CD8-positive, alpha-beta memory T cell (primary cell): ENCODE measurements at regions of chr3 and their contacts with region 1.

Region 1: DNA sequence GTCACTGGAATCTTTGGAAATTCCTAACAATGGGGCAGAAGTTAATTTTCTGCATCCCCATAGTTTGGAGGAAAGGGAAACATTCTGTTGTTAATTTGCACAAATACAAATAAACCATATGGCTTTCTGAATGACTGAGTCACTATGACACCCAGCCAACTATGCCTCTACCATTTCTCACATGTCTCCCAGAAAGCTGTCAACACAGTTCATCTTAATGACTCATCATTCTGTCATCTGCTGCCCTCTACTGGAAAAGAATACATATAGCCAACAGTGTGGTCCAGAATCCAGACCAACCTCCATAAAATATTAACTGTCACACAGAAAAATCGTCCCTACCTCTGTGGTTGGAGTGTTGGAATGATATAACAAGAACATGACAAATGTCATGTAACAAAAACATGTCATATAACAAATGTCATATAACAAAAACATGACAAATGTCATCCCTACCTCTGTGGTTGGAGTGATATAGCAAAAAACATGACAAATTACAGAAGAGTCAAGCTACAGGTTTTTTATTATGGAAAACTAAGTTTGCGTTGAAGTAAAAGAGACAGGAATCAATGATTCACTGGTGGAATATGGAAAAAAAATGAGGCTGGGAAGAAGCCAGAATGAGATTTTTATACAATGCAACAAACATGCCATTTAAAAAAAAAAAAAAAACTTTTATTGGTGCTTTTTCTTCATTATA is 47.7 kb upstream of the GYG1 start:
- DNase-seq: peak in 2 of 5 donors; percentile 19 to 30
- H3K4me3 ChIP-seq: no peak overlapping the region
- H3K4me3 Mint-ChIP-seq: no peak overlapping the region
- H3K27ac ChIP-seq: no peak overlapping the region
- H3K27ac Mint-ChIP-seq: no peak overlapping the region
- H3K4me1 ChIP-seq: no peaks in the 10 kb centered on the region
- H3K4me1 Mint-ChIP-seq: no peaks in the 10 kb centered on the region
- H3K27me3 ChIP-seq: no peaks in the 10 kb centered on the region
- H3K27me3 Mint-ChIP-seq: peaks cover 0 to 19% of the 10 kb centered on the region in 2 donors

Region 2: GRCh38 chr3:148582126-148582525 is 361.5 kb before region 1 on chr3:
- CTCF ChIA-PET with region 1: no interaction called
- POLR2A ChIA-PET with region 1: no interaction called
- DNase-seq: no peak
- H3K4me3 ChIP-seq: no peak overlapping the region
- H3K4me3 Mint-ChIP-seq: no peak overlapping the region
- H3K27ac ChIP-seq: no peak overlapping the region
- H3K27ac Mint-ChIP-seq: no peak overlapping the region
- H3K4me1 ChIP-seq: no peaks in the 10 kb centered on the region
- H3K4me1 Mint-ChIP-seq: no peaks in the 10 kb centered on the region
- H3K27me3 ChIP-seq: no peaks in the 10 kb centered on the region
- H3K27me3 Mint-ChIP-seq: no peaks in the 10 kb centered on the region

Region 3: GRCh38 chr3:148861277-148861869 is 82.3 kb before region 1 on chr3:
- CTCF ChIA-PET with region 1: interaction called, 34 read pairs
- POLR2A ChIA-PET with region 1: no interaction called
- DNase-seq: peak in 2 of 5 donors; percentile 7 to 11
- H3K4me3 ChIP-seq: no peak overlapping the region
- H3K4me3 Mint-ChIP-seq: no peak overlapping the region
- H3K27ac ChIP-seq: no peak overlapping the region
- H3K27ac Mint-ChIP-seq: no peak overlapping the region
- H3K4me1 ChIP-seq: no peaks in the 10 kb centered on the region
- H3K4me1 Mint-ChIP-seq: no peaks in the 10 kb centered on the region
- H3K27me3 ChIP-seq: no peaks in the 10 kb centered on the region
- H3K27me3 Mint-ChIP-seq: peaks cover 8 to 42% of the 10 kb centered on the region in 2 donors

Region 4: GRCh38 chr3:148889828-148890227 is 53.8 kb before region 1 on chr3:
- CTCF ChIA-PET with region 1: no interaction called
- POLR2A ChIA-PET with region 1: no interaction called
- DNase-seq: no peak
- H3K4me3 ChIP-seq: no peak overlapping the region
- H3K4me3 Mint-ChIP-seq: no peak overlapping the region
- H3K27ac ChIP-seq: no peak overlapping the region
- H3K27ac Mint-ChIP-seq: no peak overlapping the region
- H3K4me1 ChIP-seq: no peaks in the 10 kb centered on the region
- H3K4me1 Mint-ChIP-seq: no peaks in the 10 kb centered on the region
- H3K27me3 ChIP-seq: no peaks in the 10 kb centered on the region
- H3K27me3 Mint-ChIP-seq: peaks cover 1 to 33% of the 10 kb centered on the region in 2 donors

Region 5: DNA sequence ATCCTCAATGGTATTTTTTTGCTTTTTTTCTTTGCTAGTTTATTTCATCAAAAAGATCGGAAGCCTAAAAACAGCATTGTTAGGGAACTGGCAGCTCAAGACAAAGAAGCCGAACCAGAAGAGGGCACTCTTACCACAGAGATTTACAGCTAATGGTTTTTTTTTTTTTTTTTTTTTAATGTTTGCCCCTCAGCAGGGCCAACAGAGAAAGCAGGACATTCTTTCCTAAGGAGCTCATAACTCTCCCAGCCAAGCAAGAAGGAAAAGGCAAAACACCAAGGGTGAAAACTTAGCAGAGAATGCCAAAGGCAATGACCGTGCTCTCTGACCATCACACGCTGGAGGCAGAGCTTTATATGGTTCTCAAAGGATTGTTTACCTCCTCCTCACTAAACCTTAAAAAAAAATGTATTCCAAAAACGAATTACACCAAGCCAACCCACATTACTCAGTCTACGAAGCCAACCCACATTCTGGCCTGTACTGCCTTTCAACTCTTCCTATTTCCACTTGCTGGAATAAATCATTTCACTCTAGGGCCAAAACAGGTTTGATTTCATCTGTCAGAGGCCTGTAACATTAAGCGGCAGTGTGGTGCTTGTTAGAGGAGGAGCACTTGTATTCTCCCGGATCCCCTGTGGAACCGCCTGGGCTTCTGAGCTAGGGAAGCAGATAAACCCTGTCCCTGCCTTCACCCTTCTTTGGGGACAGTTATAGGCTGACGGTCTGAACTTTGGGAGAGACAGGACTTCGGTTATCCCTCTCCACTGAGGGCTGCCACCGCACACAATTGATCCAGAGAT is 12.1 kb after region 1 on chr3:
- CTCF ChIA-PET with region 1: interaction called, 12 read pairs
- POLR2A ChIA-PET with region 1: no interaction called
- DNase-seq: peak in 4 of 5 donors; percentile 12 to 51 (median 30)
- H3K4me3 ChIP-seq: no peak overlapping the region
- H3K4me3 Mint-ChIP-seq: no peak overlapping the region
- H3K27ac ChIP-seq: no peak overlapping the region
- H3K27ac Mint-ChIP-seq: peak overlapping the region in 1 of 8 donors; percentile 26
- H3K4me1 ChIP-seq: no peaks in the 10 kb centered on the region
- H3K4me1 Mint-ChIP-seq: peaks cover 0 to 4% (median 3%) of the 10 kb centered on the region in 3 donors
- H3K27me3 ChIP-seq: no peaks in the 10 kb centered on the region
- H3K27me3 Mint-ChIP-seq: peaks cover 2 to 3% of the 10 kb centered on the region in 2 donors

Region 6: GRCh38 chr3:149038322-149038721 is 94.7 kb after region 1 on chr3:
- CTCF ChIA-PET with region 1: no interaction called
- POLR2A ChIA-PET with region 1: no interaction called
- DNase-seq: no peak
- H3K4me3 ChIP-seq: no peak overlapping the region
- H3K4me3 Mint-ChIP-seq: no peak overlapping the region
- H3K27ac ChIP-seq: no peak overlapping the region
- H3K27ac Mint-ChIP-seq: no peak overlapping the region
- H3K4me1 ChIP-seq: peaks cover 8% of the 10 kb centered on the region
- H3K4me1 Mint-ChIP-seq: peaks cover 13 to 14% (median 13%) of the 10 kb centered on the region in 3 donors
- H3K27me3 ChIP-seq: no peaks in the 10 kb centered on the region
- H3K27me3 Mint-ChIP-seq: no peaks in the 10 kb centered on the region